Activated CD8-positive, alpha-beta T cell treated with anti-CD3 and anti-CD28 coated beads for 36 hours (primary cell): ENCODE measurements at regions of chr14 and their contacts with region 1.

Region 1: GRCh38 chr14:21014761-21015190 is 10.1 kb downstream of the NDRG2 start:
- DNase-seq: peak; percentile 86
- ATAC-seq: peak; percentile 73
- H3K4me3 Mint-ChIP-seq: no peak overlapping the region
- H3K27ac Mint-ChIP-seq: no peak overlapping the region
- H3K4me1 Mint-ChIP-seq: no peaks in the 10 kb centered on the region
- H3K27me3 Mint-ChIP-seq: peaks cover 12% of the 10 kb centered on the region
- CTCF ChIP-seq: peak; percentile 89

Region 2: GRCh38 chr14:20989572-20990551 is 24.9 kb before region 1 on chr14 and contains the start of gene METTL17:
- CTCF ChIA-PET with region 1: interaction called, 208 read pairs
- POLR2A ChIA-PET with region 1: no interaction called
- intact Hi-C with region 1: no loop called
- DNase-seq: peak; percentile 94
- ATAC-seq: peak; percentile 97
- H3K4me3 Mint-ChIP-seq: peak within 1 kb of the TSS; percentile 84
- H3K27ac Mint-ChIP-seq: peak within 1 kb of the TSS; percentile 88
- H3K4me1 Mint-ChIP-seq: peaks cover 26% of the 10 kb centered on the region
- H3K27me3 Mint-ChIP-seq: no peaks in the 10 kb centered on the region
- CTCF ChIP-seq: peak; percentile 51
- total RNA-seq, gene METTL17: 88.4 to 92.0 TPM

Region 3: DNA sequence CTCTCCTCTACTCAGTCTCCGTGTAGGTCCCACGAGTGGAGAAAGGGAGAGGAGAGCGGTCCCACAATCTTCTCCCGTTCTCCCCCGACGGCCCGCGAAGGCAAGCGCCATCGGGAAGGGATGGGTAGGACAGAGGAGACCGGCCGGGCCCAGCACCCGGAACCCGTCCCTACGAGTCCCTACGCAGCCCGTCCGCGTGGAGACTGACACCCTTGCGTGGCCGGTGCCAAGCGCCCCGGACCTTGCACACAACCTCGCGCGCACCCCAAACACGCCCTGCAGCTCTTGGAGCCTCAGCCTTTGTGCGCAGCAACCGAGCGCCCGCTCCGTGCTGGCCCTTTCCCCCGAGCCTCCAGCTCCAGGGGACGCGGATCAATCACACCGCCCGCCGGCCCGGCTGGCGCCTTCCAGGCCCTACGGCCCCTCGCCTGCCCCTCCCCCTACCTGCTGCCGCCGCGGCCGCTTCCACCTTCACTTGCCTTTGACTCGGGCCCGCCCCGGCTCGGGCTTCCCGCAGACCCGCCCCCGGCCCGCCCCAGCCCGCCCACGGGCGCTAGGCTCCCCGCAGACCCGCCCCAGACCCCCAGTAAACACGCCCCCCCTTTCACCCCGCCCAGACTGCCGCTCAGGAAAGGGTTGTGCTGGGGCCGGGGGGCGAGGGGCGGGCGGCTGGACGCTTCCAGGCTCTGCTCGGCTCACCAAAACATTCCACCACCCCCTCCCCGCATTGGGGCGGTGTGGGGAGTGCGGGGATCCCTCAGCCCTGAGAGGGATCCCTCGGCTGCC is 10.0 kb after region 1 on chr14 and contains the start of gene NDRG2:
- CTCF ChIA-PET with region 1: interaction called, 38 read pairs
- POLR2A ChIA-PET with region 1: interaction called, 7 read pairs
- intact Hi-C with region 1: no loop called
- DNase-seq: peak; percentile 73
- ATAC-seq: peak; percentile 77
- H3K4me3 Mint-ChIP-seq: peak within 1 kb of the TSS; percentile 78
- H3K27ac Mint-ChIP-seq: peak within 1 kb of the TSS; percentile 41
- H3K4me1 Mint-ChIP-seq: peaks cover 12% of the 10 kb centered on the region
- H3K27me3 Mint-ChIP-seq: peaks cover 2% of the 10 kb centered on the region
- CTCF ChIP-seq: no peak
- total RNA-seq, gene NDRG2: 4.3 to 5.3 TPM

Region 4: DNA sequence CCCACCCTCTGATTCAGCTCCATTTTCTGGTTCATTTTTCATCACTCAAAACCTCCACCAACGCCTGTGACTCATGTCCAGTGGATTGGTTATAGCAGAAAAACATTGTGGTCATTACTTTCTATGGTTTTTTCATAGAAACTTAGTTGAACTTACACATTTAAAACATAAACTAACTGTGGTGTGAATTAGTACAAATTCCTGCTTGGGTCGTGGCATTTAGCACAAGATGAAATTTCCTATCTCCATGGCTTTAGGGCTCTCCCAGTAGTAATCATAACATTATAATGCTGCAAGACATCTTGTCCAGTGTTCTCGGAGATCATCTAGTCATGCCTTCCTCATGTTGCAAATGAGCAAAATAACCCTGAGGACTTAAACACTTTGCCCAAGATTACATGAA is 34.5 kb after region 1 on chr14:
- CTCF ChIA-PET with region 1: interaction called, 218 read pairs
- POLR2A ChIA-PET with region 1: interaction called, 3 read pairs
- intact Hi-C with region 1: no loop called
- DNase-seq: no peak
- ATAC-seq: no peak
- H3K4me3 Mint-ChIP-seq: no peak overlapping the region
- H3K27ac Mint-ChIP-seq: no peak overlapping the region
- H3K4me1 Mint-ChIP-seq: peaks cover 4% of the 10 kb centered on the region
- H3K27me3 Mint-ChIP-seq: peaks cover 1% of the 10 kb centered on the region
- CTCF ChIP-seq: no peak

Region 5: DNA sequence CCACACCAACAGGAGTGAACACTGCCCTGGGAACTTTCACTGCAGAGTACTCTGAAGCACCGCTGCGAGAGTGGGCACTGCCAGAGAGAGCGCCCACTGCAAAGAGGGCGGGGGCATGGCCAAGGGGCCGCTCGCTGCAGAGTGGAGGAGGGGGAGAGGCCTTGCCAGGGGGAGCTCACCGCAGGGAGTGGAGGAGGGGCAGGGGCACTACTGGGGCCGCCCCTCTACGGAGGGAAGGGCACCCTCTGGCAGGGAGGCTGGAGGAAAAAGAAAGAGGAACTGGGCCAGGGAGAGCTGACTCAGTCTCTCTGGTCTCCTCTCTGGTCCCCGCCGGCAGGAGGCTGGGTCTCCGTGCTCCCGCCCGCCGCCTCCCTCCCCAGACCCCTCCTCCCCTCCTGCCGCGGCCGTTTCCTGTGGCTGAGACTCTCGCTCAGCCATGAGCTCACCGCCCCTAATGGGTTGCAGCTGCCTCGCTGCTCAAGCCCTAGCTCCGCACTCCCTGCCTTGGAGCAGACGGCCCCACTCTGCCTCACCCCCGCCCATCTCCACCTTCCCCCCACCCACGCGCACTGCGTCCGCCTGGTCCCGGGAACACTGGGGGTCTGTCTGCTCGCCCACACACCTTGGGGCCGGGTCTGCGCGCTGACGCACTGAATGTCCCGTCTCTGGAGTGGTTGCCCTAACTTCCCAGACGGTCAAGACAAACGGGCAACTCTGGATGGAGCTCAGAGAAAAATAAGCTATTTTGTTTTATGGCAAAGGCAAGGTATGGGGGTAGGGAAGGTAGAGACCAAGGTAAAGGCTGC is 56.7 kb after region 1 on chr14:
- CTCF ChIA-PET with region 1: interaction called, 53 read pairs
- POLR2A ChIA-PET with region 1: no interaction called
- intact Hi-C with region 1: no loop called
- DNase-seq: peak; percentile 76
- ATAC-seq: peak; percentile 76
- H3K4me3 Mint-ChIP-seq: peak overlapping the region; percentile 69
- H3K27ac Mint-ChIP-seq: no peak overlapping the region
- H3K4me1 Mint-ChIP-seq: peaks cover 31% of the 10 kb centered on the region
- H3K27me3 Mint-ChIP-seq: peaks cover 56% of the 10 kb centered on the region
- CTCF ChIP-seq: no peak

Region 6: DNA sequence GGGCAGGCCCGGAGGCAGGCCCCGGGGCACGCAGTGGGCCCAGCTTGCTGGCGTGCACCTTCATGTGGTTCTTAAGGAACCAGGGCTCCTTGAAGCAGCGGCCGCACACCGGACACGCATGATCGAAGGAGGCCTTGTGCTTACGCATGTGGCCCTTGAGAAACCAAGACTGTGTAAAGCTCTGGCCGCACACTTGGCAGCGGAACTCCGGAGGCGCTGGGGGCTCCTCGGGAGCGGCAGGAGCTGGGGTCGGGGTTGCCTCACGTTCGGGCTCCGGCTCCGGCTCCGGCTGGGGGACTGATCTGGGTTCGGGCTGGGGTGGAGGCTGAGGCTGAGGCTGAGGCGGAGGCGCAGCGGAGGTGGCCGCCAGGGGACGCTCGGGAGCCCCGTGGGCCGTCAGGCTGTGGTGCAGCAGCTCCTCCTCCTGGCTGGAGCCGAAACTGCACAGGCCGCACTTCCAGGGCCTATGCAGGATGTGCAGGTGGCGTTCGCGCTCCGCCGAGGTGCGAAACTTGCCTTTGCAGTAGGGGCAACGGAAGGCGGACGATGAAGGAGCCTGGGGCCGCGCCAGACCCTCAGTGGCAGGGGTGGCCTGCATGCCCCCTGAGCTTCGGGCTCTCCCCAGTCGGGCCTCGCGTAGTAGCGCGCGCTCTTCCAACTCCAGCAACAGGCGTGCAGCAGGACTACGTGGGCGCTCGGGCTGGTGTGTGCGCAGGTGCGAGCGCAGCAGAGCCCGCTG is 77.7 kb after region 1 on chr14:
- CTCF ChIA-PET with region 1: interaction called, 224 read pairs
- POLR2A ChIA-PET with region 1: interaction called, 6 read pairs
- intact Hi-C with region 1: loop called (anchors 2 kb)
- DNase-seq: peak; percentile 94
- ATAC-seq: peak; percentile 97
- H3K4me3 Mint-ChIP-seq: no peak overlapping the region
- H3K27ac Mint-ChIP-seq: no peak overlapping the region
- H3K4me1 Mint-ChIP-seq: peaks cover 15% of the 10 kb centered on the region
- H3K27me3 Mint-ChIP-seq: no peaks in the 10 kb centered on the region
- CTCF ChIP-seq: peak; percentile 100

Region 7: GRCh38 chr14:21136024-21136423 is 121.2 kb after region 1 on chr14:
- CTCF ChIA-PET with region 1: interaction called, 17 read pairs
- POLR2A ChIA-PET with region 1: no interaction called
- intact Hi-C with region 1: no loop called
- DNase-seq: no peak
- ATAC-seq: no peak
- H3K4me3 Mint-ChIP-seq: no peak overlapping the region
- H3K27ac Mint-ChIP-seq: no peak overlapping the region
- H3K4me1 Mint-ChIP-seq: no peaks in the 10 kb centered on the region
- H3K27me3 Mint-ChIP-seq: no peaks in the 10 kb centered on the region
- CTCF ChIP-seq: peak; percentile 85